SK-N-SH (cell line): ENCODE measurements at regions of chr3 and their contacts with region 1.

Region 1: GRCh38 chr3:194682694-194683310 is 2.9 kb upstream of the FAM43A start:
- DNase-seq: peak; percentile 81
- H3K4me3 ChIP-seq: peak overlapping the region in 1 of 2 experiments; percentile 25; a peak in 1 of 4 replicates
- H3K27ac ChIP-seq: peak overlapping the region in 1 of 2 experiments; percentile 26; a peak in 1 of 4 replicates
- H3K4me1 ChIP-seq: peaks cover 5 to 28% of the 10 kb centered on the region in 2 experiments; a peak in 1 of 4 replicates
- H3K27me3 ChIP-seq: no peaks in the 10 kb centered on the region
- CTCF ChIP-seq: peak; percentile 93
- EP300 ChIP-seq: no peak
- RAD21 ChIP-seq: peak; percentile 100

Region 2: DNA sequence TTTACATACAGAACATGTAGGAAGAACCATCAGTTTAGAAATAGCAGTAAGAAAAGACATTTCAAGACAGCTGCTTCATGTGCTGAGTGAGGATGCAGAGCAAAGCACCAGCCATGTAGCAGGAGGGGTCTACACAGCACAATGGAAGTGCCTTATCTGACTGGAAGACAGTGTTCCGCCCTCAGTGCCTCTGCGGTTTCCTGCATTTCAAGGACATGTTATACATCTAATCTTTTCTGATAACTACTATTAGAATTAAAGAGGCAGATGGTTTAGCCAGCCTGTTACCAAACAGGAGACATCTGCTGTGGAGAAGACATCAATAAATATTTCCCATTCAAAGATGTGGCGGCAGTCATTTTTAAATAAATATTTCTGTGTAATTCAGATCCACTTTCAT is 21.4 kb before region 1 on chr3:
- CTCF ChIA-PET with region 1: no interaction called
- POLR2A ChIA-PET with region 1: no interaction called
- DNase-seq: no peak
- H3K4me3 ChIP-seq: no peak overlapping the region
- H3K27ac ChIP-seq: no peak overlapping the region
- H3K4me1 ChIP-seq: no peaks in the 10 kb centered on the region
- H3K27me3 ChIP-seq: no peaks in the 10 kb centered on the region
- CTCF ChIP-seq: no peak
- EP300 ChIP-seq: no peak
- RAD21 ChIP-seq: no peak

Region 3: DNA sequence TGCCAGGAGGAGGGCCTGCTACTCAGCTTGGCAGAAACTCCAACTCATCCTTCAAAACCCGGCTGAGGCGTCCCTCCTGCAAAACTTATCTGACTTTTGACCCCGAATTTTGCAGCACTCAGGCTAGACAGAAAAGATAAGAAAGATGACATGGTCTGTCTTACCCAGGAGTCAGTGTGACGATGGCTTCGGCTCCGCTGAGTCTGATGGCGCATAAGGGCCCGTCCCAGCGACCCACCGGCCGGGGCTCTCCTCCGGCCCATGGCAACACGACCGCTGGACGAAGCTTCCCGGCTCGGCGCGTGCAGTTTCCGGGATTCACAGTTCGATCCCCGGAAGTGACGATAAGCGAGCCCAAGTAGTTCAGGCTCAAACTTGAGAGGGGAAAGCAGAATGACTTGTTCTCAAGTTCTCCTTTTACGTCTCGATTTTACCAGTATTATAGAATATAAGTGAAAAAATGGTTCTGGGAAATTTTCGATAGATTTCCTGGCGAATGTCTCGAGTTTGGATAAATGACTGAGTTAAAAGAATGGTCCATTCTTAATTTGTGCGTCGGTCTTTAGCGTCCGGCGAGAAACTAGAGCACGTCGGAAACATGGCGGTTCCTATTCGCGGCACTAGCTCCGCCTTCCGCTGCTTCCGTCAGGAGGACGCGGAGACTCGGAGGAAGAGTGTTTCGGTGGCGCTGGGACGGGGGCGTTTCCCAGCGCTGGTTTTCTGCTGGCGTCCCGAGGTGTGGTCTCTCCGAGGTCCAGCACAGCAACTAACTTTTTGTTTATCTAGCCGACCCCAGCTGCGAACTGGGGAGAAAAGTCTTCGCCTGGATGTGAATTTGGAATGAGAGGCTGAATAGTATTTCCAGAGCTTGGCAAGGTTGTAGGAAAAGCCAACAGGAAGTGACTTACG is 10.6 kb before region 1 on chr3 and contains the start of gene LSG1:
- CTCF ChIA-PET with region 1: interaction called, 69 read pairs
- POLR2A ChIA-PET with region 1: interaction called, 12 read pairs
- DNase-seq: peak; percentile 89
- H3K4me3 ChIP-seq: peak within 1 kb of the TSS; percentile 94 to 95
- H3K27ac ChIP-seq: peak within 1 kb of the TSS; percentile 83 to 92
- H3K4me1 ChIP-seq: peaks cover 10 to 12% of the 10 kb centered on the region in 2 experiments; a peak in 3 of 4 replicates
- H3K27me3 ChIP-seq: no peaks in the 10 kb centered on the region
- CTCF ChIP-seq: no peak
- EP300 ChIP-seq: peak; percentile 18 to 57; a peak in 1 of 4 replicates
- RAD21 ChIP-seq: no peak
- polyA plus RNA-seq, gene LSG1: 35.1 and 43.7 TPM in 2 replicates

Region 4: GRCh38 chr3:195015021-195015420 is 332.2 kb after region 1 on chr3:
- CTCF ChIA-PET with region 1: interaction called, 11 read pairs
- POLR2A ChIA-PET with region 1: no interaction called
- DNase-seq: no peak
- H3K4me3 ChIP-seq: no peak overlapping the region
- H3K27ac ChIP-seq: peak overlapping the region in 1 of 2 experiments; percentile 98; a peak in 2 of 4 replicates
- H3K4me1 ChIP-seq: peaks cover 0 to 34% of the 10 kb centered on the region in 2 experiments; a peak in 2 of 4 replicates
- H3K27me3 ChIP-seq: 0 out of 2 replicates have a peak, but pooled peaks cover 16% of the 10 kb centered on the region
- CTCF ChIP-seq: no peak
- EP300 ChIP-seq: no peak
- RAD21 ChIP-seq: no peak

Region 5: DNA sequence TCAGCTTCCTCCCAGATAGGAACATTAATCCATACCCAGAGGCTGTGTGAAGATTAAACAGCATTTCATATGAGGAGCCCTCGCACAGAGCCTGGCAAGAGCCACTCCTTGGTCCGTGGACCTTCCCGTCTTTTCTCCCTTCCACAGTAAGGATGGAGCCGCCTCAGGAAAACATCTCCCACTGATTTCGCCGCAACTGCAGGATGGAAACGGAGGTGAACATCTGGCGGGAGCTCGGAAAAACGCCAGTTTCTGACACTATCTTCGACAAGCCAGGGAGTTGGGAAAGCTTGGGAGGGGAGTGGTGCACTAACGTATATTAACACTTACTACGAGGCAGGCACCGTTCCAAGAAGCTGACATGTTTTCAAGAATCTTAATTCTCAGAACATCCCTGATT is 430.2 kb after region 1 on chr3:
- CTCF ChIA-PET with region 1: interaction called, 96 read pairs
- POLR2A ChIA-PET with region 1: no interaction called
- DNase-seq: no peak
- H3K4me3 ChIP-seq: no peak overlapping the region
- H3K27ac ChIP-seq: no peak overlapping the region
- H3K4me1 ChIP-seq: peaks cover 5 to 6% of the 10 kb centered on the region in 2 experiments; a peak in 1 of 4 replicates
- H3K27me3 ChIP-seq: no peaks in the 10 kb centered on the region
- CTCF ChIP-seq: no peak
- EP300 ChIP-seq: no peak
- RAD21 ChIP-seq: no peak

Region 6: DNA sequence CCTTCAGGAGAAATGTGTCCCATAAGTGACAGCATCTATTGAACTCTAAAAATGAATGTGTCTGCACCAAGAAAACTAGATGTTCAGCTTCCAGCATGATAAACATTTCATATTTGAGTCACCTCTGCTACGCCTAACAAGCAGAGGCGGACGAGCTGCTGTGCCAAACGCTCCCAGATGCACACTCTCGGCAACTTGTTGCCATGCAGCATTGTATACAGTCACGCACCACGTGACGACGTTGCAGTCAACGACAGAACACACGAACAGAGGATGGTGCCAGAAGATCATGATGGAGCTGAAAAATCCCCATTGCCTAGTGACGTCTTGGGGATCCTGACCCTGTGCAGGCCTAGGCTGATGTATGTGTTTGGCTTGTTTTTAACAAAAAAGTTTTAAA is 450.7 kb after region 1 on chr3:
- CTCF ChIA-PET with region 1: interaction called, 11 read pairs
- POLR2A ChIA-PET with region 1: no interaction called
- DNase-seq: no peak
- H3K4me3 ChIP-seq: no peak overlapping the region
- H3K27ac ChIP-seq: peak overlapping the region in 1 of 2 experiments; percentile 47; a peak in 2 of 4 replicates
- H3K4me1 ChIP-seq: peaks cover 0 to 63% of the 10 kb centered on the region in 2 experiments; a peak in 2 of 4 replicates
- H3K27me3 ChIP-seq: no peaks in the 10 kb centered on the region
- CTCF ChIP-seq: no peak
- EP300 ChIP-seq: 0 out of 4 replicates have a peak, but pooled peaks of 1 of the 2 experiments have one; percentile 4
- RAD21 ChIP-seq: 0 out of 2 replicates have a peak, but pooled peaks have one; percentile 5

Region 7: DNA sequence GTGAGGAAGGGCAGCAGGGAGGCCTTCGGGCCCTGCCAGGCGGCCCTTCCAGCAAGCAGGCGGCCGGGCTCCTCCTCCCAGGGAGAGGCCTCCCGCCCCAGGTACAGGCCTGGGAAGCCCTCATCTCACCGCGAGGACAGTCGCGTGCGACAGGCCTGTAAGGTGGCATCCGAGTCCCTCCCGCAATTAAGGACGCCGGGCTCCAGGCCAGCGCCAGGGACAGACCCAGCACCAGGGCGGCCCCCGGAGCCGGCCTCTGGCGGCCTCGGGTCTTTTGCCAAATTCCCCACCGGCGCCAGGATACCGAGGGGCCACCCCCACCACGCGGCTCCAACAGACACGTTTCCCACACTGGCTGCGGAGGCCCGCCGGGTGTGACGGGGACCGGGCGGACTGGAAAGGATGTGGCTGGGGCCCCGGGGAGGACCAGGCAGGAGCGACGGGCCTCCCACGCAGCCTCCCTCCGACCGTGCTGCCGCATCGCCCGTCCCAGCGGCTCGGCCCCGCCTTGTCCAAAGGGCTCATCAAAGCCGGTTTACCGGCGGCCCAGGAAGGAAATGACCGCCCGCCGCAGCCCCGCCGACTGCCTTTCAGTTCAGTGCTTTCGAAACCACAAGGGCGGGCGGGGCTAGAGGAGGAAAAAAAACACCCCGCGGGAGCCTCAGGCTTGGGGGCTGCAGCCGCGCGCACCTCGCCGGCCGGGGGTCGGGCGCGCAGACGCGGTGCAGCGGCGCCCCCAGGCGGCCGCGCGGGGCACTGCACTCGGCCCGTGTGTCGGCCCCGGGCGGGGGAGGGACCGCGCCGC is 576.9 kb after region 1 on chr3:
- CTCF ChIA-PET with region 1: interaction called, 50 read pairs
- POLR2A ChIA-PET with region 1: interaction called, 5 read pairs
- DNase-seq: peak; percentile 98
- H3K4me3 ChIP-seq: peak overlapping the region; percentile 63 to 72
- H3K27ac ChIP-seq: peak overlapping the region; percentile 83 to 97
- H3K4me1 ChIP-seq: peaks cover 18 to 57% of the 10 kb centered on the region in 2 experiments
- H3K27me3 ChIP-seq: no peaks in the 10 kb centered on the region
- CTCF ChIP-seq: peak; percentile 40
- EP300 ChIP-seq: peak in 1 of 2 experiments; percentile 45; a peak in 1 of 4 replicates
- RAD21 ChIP-seq: peak; percentile 65